ENCODE measurements at regions of chr11 and their contacts with region 1.

Region 1: GRCh38 chr11:86608251-86608799 is 64.1 kb downstream of the ME3 start:
- DNase-seq: peak; percentile 40
- H3K4me3 ChIP-seq: peak overlapping the region in 1 of 2 experiments; percentile 27; a peak in 2 of 4 replicates
- H3K27ac ChIP-seq: peak overlapping the region; percentile 65 to 78; a peak in 3 of 4 replicates
- H3K4me1 ChIP-seq: peaks cover 6 to 15% of the 10 kb centered on the region in 2 experiments; a peak in 3 of 4 replicates
- H3K27me3 ChIP-seq: no peaks in the 10 kb centered on the region
- CTCF ChIP-seq: peak; percentile 99
- EP300 ChIP-seq: no peak; a peak in 1 of 4 replicates
- RAD21 ChIP-seq: peak; percentile 54

Region 2: GRCh38 chr11:86456052-86456939 is 152.0 kb before region 1 on chr11:
- CTCF ChIA-PET with region 1: interaction called, 41 read pairs
- POLR2A ChIA-PET with region 1: no interaction called
- DNase-seq: peak; percentile 75
- H3K4me3 ChIP-seq: no peak overlapping the region; a peak in 1 of 4 replicates
- H3K27ac ChIP-seq: no peak overlapping the region
- H3K4me1 ChIP-seq: peaks cover 2 to 21% of the 10 kb centered on the region in 2 experiments; a peak in 3 of 4 replicates
- H3K27me3 ChIP-seq: no peaks in the 10 kb centered on the region
- CTCF ChIP-seq: peak; percentile 94
- EP300 ChIP-seq: no peak
- RAD21 ChIP-seq: peak; percentile 94

Region 3: DNA sequence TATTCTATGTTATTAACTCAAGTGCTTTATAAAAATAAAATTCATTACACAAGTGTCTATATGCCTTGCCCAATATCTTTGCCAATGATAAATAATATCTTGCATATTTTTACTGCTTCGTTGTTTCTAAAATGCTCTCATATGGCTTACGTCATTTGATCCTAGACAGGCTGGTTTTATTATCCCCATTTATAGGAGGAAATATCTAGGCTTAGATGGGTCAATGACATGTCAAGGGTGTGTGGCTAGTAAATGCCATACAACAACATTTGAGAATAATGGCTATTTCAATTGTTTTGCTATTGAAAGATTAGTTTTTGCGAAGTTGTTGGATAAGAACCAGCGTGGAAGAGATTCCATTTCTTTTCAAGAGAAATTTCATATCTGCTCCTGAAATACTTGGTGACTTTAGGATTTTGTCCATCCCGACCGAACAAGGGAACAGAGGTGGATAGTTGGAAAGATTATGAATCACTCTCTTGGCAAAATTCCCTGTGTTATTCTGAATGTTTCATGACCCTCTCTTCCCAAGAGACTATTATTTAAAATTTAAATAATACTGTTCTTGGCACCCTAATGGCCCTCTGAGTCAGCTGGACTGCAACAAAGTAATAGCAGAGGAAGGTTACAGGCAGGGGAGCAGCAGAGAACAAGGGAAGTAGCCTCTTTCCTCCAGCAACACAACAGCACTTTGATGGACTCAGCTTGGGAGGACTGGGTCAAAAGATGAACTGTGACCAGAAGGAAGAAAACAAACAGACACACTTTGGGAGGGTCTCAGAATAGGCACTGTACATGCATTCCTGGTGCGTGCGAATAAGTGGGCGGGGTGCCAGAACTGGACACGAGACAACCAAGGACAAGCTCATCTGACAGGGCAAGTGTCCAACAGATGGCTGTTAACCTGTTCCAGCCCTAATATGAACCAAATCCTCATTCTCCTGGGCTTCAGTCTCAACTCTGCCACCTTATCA is 30.4 kb before region 1 on chr11:
- CTCF ChIA-PET with region 1: interaction called, 14 read pairs
- POLR2A ChIA-PET with region 1: no interaction called
- DNase-seq: no peak
- H3K4me3 ChIP-seq: no peak overlapping the region
- H3K27ac ChIP-seq: peak overlapping the region; percentile 60 to 89
- H3K4me1 ChIP-seq: peaks cover 5 to 42% of the 10 kb centered on the region in 2 experiments
- H3K27me3 ChIP-seq: no peaks in the 10 kb centered on the region
- CTCF ChIP-seq: no peak
- EP300 ChIP-seq: peak in 1 of 2 experiments; percentile 69; a peak in 1 of 4 replicates
- RAD21 ChIP-seq: no peak

Region 4: GRCh38 chr11:86620891-86621521 is 12.7 kb after region 1 on chr11:
- CTCF ChIA-PET with region 1: interaction called, 27 read pairs
- POLR2A ChIA-PET with region 1: no interaction called
- DNase-seq: no peak
- H3K4me3 ChIP-seq: no peak overlapping the region
- H3K27ac ChIP-seq: peak overlapping the region; percentile 22 to 65; a peak in 3 of 4 replicates
- H3K4me1 ChIP-seq: peaks cover 0 to 13% of the 10 kb centered on the region in 2 experiments; a peak in 2 of 4 replicates
- H3K27me3 ChIP-seq: no peaks in the 10 kb centered on the region
- CTCF ChIP-seq: no peak
- EP300 ChIP-seq: no peak
- RAD21 ChIP-seq: no peak

Region 5: GRCh38 chr11:86802601-86803051 is 194.3 kb after region 1 on chr11:
- CTCF ChIA-PET with region 1: interaction called, 12 read pairs
- POLR2A ChIA-PET with region 1: no interaction called
- DNase-seq: peak; percentile 43
- H3K4me3 ChIP-seq: peak overlapping the region; percentile 73 to 84; a peak in 3 of 4 replicates
- H3K27ac ChIP-seq: peak overlapping the region; percentile 60 to 93; a peak in 3 of 4 replicates
- H3K4me1 ChIP-seq: peaks cover 6 to 30% of the 10 kb centered on the region in 2 experiments
- H3K27me3 ChIP-seq: no peaks in the 10 kb centered on the region
- CTCF ChIP-seq: peak; percentile 70
- EP300 ChIP-seq: no peak
- RAD21 ChIP-seq: peak; percentile 41; the same call in 1 of the 2 replicates